Sigmoid colon (tissue), 7 donors: ENCODE measurements at regions of chr6 and their contacts with region 1.

Region 1: GRCh38 chr6:25263657-25264056 is 15.5 kb upstream of the CARMIL1 start:
- DNase-seq: no peak
- H3K4me3 ChIP-seq: no peak overlapping the region
- H3K27ac ChIP-seq: no peak overlapping the region
- H3K4me1 ChIP-seq: no peaks in the 10 kb centered on the region
- H3K27me3 ChIP-seq: no peaks in the 10 kb centered on the region
- CTCF ChIP-seq: no peak
- EP300 ChIP-seq: no peak
- POLR2A ChIP-seq: no peak

Region 2: GRCh38 chr6:24574809-24575208 is 688.8 kb before region 1 on chr6:
- intact Hi-C with region 1: no loop called
- DNase-seq: no peak
- H3K4me3 ChIP-seq: no peak overlapping the region
- H3K27ac ChIP-seq: no peak overlapping the region
- H3K4me1 ChIP-seq: no peaks in the 10 kb centered on the region
- H3K27me3 ChIP-seq: no peaks in the 10 kb centered on the region
- CTCF ChIP-seq: no peak
- EP300 ChIP-seq: no peak
- POLR2A ChIP-seq: no peak

Region 3: GRCh38 chr6:25942561-25943147 is 679.0 kb after region 1 on chr6:
- intact Hi-C with region 1: loop called (anchors 10 kb)
- DNase-seq: no peak
- H3K4me3 ChIP-seq: no peak overlapping the region
- H3K27ac ChIP-seq: no peak overlapping the region
- H3K4me1 ChIP-seq: no peaks in the 10 kb centered on the region
- H3K27me3 ChIP-seq: no peaks in the 10 kb centered on the region
- CTCF ChIP-seq: no peak
- EP300 ChIP-seq: no peak
- POLR2A ChIP-seq: no peak